ENCODE measurements at regions of chr5 and their contacts with region 1.

Region 1: DNA sequence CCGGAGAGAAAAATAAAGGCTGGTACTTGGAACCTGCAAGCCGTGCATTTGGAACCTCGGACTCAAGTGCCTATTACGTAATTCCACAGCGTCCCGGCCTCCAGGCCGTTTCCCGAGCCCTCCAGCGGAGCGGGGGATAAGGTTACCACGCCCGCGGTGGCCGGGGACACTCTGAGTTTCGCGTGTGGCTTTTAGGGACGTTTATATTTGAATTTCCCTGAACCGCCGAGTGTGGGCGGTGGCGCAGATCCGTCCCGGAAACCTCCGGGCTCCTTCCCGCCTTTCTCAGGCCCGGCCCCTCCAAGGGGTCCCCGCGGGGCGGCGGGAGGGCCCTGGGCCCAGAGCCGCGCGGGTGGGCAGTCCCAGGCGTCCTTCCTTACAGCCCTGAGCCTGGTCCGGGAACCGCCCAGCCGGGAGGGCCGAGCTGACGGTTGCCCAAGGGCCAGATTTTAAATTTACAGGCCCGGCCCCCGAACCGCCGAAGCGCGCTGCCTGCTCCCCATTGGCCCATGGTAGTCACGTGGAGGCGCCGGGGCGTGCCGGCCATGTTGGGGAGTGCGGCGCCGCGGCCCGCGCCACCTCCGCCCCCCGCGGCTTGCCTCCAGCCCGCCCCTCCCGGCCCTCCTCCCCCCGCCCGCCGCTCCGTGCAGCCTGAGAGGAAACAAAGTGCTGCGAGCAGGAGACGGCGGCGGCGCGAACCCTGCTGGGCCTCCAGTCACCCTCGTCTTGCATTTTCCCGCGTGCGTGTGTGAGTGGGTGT is at the start of gene LMNB1:
- DNase-seq: peak; percentile 96
- ATAC-seq: peak; percentile 73
- H3K4me3 ChIP-seq: peak within 1 kb of the TSS; percentile 74 to 96 (median 81)
- H3K4me3 Mint-ChIP-seq: peak within 1 kb of the TSS; percentile 92
- H3K27ac ChIP-seq: peak within 1 kb of the TSS; percentile 93 to 97
- H3K27ac Mint-ChIP-seq: peak within 1 kb of the TSS; percentile 99
- H3K4me1 ChIP-seq: peaks cover 19 to 32% of the 10 kb centered on the region in 2 donors
- H3K4me1 Mint-ChIP-seq: peaks cover 29% of the 10 kb centered on the region
- H3K27me3 ChIP-seq: no peaks in the 10 kb centered on the region
- H3K27me3 Mint-ChIP-seq: no peaks in the 10 kb centered on the region
- CTCF ChIP-seq: peak; percentile 6
- total RNA-seq, gene LMNB1: 25.1 and 27.7 TPM in 2 replicates

Region 2: DNA sequence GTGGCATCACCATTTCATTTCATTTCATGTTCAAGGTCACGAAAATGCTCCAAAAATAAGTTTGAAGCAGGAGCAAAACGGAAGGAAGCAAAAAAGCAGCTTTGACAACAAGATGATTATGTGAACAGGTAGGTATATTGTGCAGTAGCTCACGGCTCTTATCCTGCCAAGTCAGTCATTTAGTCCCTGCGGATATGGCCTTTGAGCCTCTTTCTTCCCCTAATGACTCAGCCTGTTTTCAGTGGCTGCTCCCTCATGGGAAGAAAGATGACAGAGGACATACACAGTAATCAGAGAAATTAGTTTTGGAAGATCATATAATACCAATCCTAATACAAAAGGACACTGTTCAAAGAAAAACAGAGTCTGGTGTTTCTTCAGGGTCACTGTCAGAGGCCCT is 509.2 kb before region 1 on chr5:
- CTCF ChIA-PET with region 1: no interaction called
- POLR2A ChIA-PET with region 1: no interaction called
- intact Hi-C with region 1: no loop called
- DNase-seq: no peak
- ATAC-seq: no peak
- H3K4me3 ChIP-seq: no peak overlapping the region
- H3K4me3 Mint-ChIP-seq: no peak overlapping the region
- H3K27ac ChIP-seq: no peak overlapping the region
- H3K27ac Mint-ChIP-seq: no peak overlapping the region
- H3K4me1 ChIP-seq: no peaks in the 10 kb centered on the region
- H3K4me1 Mint-ChIP-seq: no peaks in the 10 kb centered on the region
- H3K27me3 ChIP-seq: no peaks in the 10 kb centered on the region
- H3K27me3 Mint-ChIP-seq: peaks cover 3% of the 10 kb centered on the region
- CTCF ChIP-seq: no peak

Region 3: GRCh38 chr5:126594676-126595485 is 181.8 kb before region 1 on chr5 and contains the start of gene ALDH7A1:
- CTCF ChIA-PET with region 1: no interaction called
- POLR2A ChIA-PET with region 1: no interaction called
- intact Hi-C with region 1: loop called (anchors 1 kb)
- DNase-seq: peak; percentile 61
- ATAC-seq: peak; percentile 84
- H3K4me3 ChIP-seq: peak within 1 kb of the TSS; percentile 44 to 67 (median 62)
- H3K4me3 Mint-ChIP-seq: peak within 1 kb of the TSS; percentile 94
- H3K27ac ChIP-seq: peak within 1 kb of the TSS in 1 of 2 donors; percentile 33
- H3K27ac Mint-ChIP-seq: no peak within 1 kb of the TSS
- H3K4me1 ChIP-seq: peaks cover 5 to 14% of the 10 kb centered on the region in 2 donors
- H3K4me1 Mint-ChIP-seq: peaks cover 12% of the 10 kb centered on the region
- H3K27me3 ChIP-seq: no peaks in the 10 kb centered on the region
- H3K27me3 Mint-ChIP-seq: peaks cover 11% of the 10 kb centered on the region
- CTCF ChIP-seq: no peak
- total RNA-seq, gene ALDH7A1: 2.4 and 3.3 TPM in 2 replicates

Region 4: GRCh38 chr5:126676195-126676624 is 100.5 kb before region 1 on chr5:
- CTCF ChIA-PET with region 1: interaction called, 289 read pairs
- POLR2A ChIA-PET with region 1: interaction called, 8 read pairs
- intact Hi-C with region 1: loop called (anchors 1 kb)
- DNase-seq: peak; percentile 79
- ATAC-seq: peak; percentile 75
- H3K4me3 ChIP-seq: no peak overlapping the region
- H3K4me3 Mint-ChIP-seq: no peak overlapping the region
- H3K27ac ChIP-seq: no peak overlapping the region
- H3K27ac Mint-ChIP-seq: no peak overlapping the region
- H3K4me1 ChIP-seq: peaks cover 0 to 4% of the 10 kb centered on the region in 2 donors
- H3K4me1 Mint-ChIP-seq: peaks cover 3% of the 10 kb centered on the region
- H3K27me3 ChIP-seq: no peaks in the 10 kb centered on the region
- H3K27me3 Mint-ChIP-seq: no peaks in the 10 kb centered on the region
- CTCF ChIP-seq: peak; percentile 87

Region 5: DNA sequence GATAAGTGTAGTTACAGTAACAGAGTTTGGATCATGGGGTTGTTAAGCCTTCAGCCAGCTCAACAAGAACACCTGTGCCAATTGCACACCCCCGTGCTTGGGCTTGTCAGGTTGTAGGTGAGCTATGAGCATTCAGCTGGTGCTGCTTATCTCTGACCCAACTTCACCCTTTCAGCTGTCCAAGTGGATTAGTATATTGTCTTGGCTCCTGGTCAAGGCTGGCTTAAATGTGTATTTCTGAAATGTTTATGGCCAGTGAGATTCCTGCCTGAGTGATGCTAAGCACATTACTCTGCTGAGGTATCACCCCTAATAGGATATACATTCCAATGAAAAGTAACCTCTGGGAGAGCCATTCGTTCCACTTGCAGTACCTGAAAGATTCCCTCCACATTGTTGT is 44.0 kb before region 1 on chr5:
- CTCF ChIA-PET with region 1: no interaction called
- POLR2A ChIA-PET with region 1: no interaction called
- intact Hi-C with region 1: no loop called
- DNase-seq: no peak
- ATAC-seq: no peak
- H3K4me3 ChIP-seq: no peak overlapping the region
- H3K4me3 Mint-ChIP-seq: no peak overlapping the region
- H3K27ac ChIP-seq: no peak overlapping the region
- H3K27ac Mint-ChIP-seq: no peak overlapping the region
- H3K4me1 ChIP-seq: no peaks in the 10 kb centered on the region
- H3K4me1 Mint-ChIP-seq: peaks cover 4% of the 10 kb centered on the region
- H3K27me3 ChIP-seq: no peaks in the 10 kb centered on the region
- H3K27me3 Mint-ChIP-seq: no peaks in the 10 kb centered on the region
- CTCF ChIP-seq: no peak

Region 6: GRCh38 chr5:126794157-126794828 is 17.6 kb after region 1 on chr5:
- CTCF ChIA-PET with region 1: interaction called, 25 read pairs
- POLR2A ChIA-PET with region 1: interaction called, 3 read pairs
- intact Hi-C with region 1: no loop called
- DNase-seq: no peak
- ATAC-seq: no peak
- H3K4me3 ChIP-seq: no peak overlapping the region
- H3K4me3 Mint-ChIP-seq: no peak overlapping the region
- H3K27ac ChIP-seq: no peak overlapping the region
- H3K27ac Mint-ChIP-seq: no peak overlapping the region
- H3K4me1 ChIP-seq: peaks cover 0 to 11% of the 10 kb centered on the region in 2 donors
- H3K4me1 Mint-ChIP-seq: peaks cover 31% of the 10 kb centered on the region
- H3K27me3 ChIP-seq: no peaks in the 10 kb centered on the region
- H3K27me3 Mint-ChIP-seq: no peaks in the 10 kb centered on the region
- CTCF ChIP-seq: no peak

Region 7: DNA sequence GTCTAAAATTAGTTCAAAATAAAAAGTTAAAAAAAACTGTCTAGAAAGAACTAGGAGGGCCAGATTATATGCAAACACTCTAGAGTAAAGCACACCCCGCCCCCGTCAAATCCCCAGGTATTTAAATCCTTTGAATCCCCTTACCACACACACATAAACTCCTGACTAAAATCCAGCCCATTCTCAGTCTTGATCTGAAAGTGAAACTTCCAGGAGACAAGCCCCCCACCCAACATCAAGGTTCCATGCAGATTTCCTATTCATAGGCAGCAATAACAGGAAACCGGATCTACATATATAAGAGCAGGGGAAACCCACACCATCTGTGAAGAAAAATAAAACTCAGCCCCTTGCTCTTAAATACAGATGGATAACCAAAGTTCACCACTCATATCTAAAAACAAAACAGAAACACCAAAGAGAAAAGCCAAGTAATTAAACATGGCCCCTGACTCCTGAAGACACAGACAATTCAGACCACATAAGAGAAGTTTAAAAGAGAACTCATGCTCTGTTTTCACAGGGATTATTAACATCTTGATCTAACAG is 211.4 kb after region 1 on chr5:
- CTCF ChIA-PET with region 1: no interaction called
- POLR2A ChIA-PET with region 1: no interaction called
- intact Hi-C with region 1: loop called (anchors 2 kb)
- DNase-seq: peak; percentile 85
- ATAC-seq: peak; percentile 87
- H3K4me3 ChIP-seq: peak overlapping the region; percentile 27 to 52 (median 42)
- H3K4me3 Mint-ChIP-seq: peak overlapping the region; percentile 88
- H3K27ac ChIP-seq: peak overlapping the region; percentile 91 to 94
- H3K27ac Mint-ChIP-seq: peak overlapping the region; percentile 97
- H3K4me1 ChIP-seq: peaks cover 71% of the 10 kb centered on the region in 2 donors
- H3K4me1 Mint-ChIP-seq: peaks cover 80% of the 10 kb centered on the region
- H3K27me3 ChIP-seq: no peaks in the 10 kb centered on the region
- H3K27me3 Mint-ChIP-seq: no peaks in the 10 kb centered on the region
- CTCF ChIP-seq: no peak

Region 8: GRCh38 chr5:127517480-127518318 is 741.0 kb after region 1 on chr5 and contains the start of gene PRRC1:
- CTCF ChIA-PET with region 1: interaction called, 3 read pairs
- POLR2A ChIA-PET with region 1: no interaction called
- intact Hi-C with region 1: loop called (anchors 5 kb)
- DNase-seq: peak; percentile 86
- ATAC-seq: peak; percentile 96
- H3K4me3 ChIP-seq: peak within 1 kb of the TSS; percentile 85 to 99 (median 98)
- H3K4me3 Mint-ChIP-seq: peak within 1 kb of the TSS; percentile 93
- H3K27ac ChIP-seq: peak within 1 kb of the TSS; percentile 67 to 85
- H3K27ac Mint-ChIP-seq: peak within 1 kb of the TSS; percentile 79
- H3K4me1 ChIP-seq: peaks cover 12% of the 10 kb centered on the region in 2 donors
- H3K4me1 Mint-ChIP-seq: peaks cover 26% of the 10 kb centered on the region
- H3K27me3 ChIP-seq: no peaks in the 10 kb centered on the region
- H3K27me3 Mint-ChIP-seq: peaks cover 4% of the 10 kb centered on the region
- CTCF ChIP-seq: no peak
- total RNA-seq, gene PRRC1: 33.7 and 35.5 TPM in 2 replicates